ENCODE measurements at regions of chr11 and their contacts with region 1.

Region 1: GRCh38 chr11:72483412-72484186 is 49.3 kb upstream of the CLPB start:
- DNase-seq: no peak
- H3K4me3 Mint-ChIP-seq: no peak overlapping the region
- H3K27ac Mint-ChIP-seq: peak overlapping the region; percentile 7
- H3K4me1 Mint-ChIP-seq: peaks cover 13% of the 10 kb centered on the region
- H3K27me3 Mint-ChIP-seq: peaks cover 13% of the 10 kb centered on the region

Region 2: GRCh38 chr11:72519220-72519881 is 35.8 kb after region 1 on chr11:
- intact Hi-C with region 1: loop called (anchors 5 kb)
- DNase-seq: peak; percentile 11
- H3K4me3 Mint-ChIP-seq: peak overlapping the region; percentile 63
- H3K27ac Mint-ChIP-seq: peak overlapping the region; percentile 50
- H3K4me1 Mint-ChIP-seq: peaks cover 23% of the 10 kb centered on the region
- H3K27me3 Mint-ChIP-seq: peaks cover 29% of the 10 kb centered on the region

Region 3: DNA sequence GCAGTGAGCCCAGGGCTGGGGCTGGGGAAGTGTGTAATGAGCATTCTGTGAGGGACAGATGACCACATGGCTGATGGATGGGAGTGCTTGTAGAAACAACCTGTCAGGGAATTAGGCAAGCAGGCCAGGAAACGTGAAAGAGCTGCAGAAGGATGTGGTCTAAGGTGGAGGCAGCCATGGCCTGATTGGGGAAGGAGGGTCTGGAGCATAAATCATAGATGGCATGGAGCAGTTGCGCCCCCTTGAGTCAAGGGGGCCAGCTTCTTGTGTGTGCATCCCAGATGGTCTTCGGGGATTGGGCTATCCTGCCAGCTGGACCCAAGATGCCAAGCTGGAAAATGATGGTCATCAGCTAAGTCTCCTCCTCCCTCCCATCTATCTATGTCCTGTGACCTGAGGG is 70.1 kb after region 1 on chr11:
- intact Hi-C with region 1: loop called (anchors 5 kb)
- DNase-seq: no peak
- H3K4me3 Mint-ChIP-seq: no peak overlapping the region
- H3K27ac Mint-ChIP-seq: no peak overlapping the region
- H3K4me1 Mint-ChIP-seq: peaks cover 5% of the 10 kb centered on the region
- H3K27me3 Mint-ChIP-seq: peaks cover 16% of the 10 kb centered on the region

Region 4: DNA sequence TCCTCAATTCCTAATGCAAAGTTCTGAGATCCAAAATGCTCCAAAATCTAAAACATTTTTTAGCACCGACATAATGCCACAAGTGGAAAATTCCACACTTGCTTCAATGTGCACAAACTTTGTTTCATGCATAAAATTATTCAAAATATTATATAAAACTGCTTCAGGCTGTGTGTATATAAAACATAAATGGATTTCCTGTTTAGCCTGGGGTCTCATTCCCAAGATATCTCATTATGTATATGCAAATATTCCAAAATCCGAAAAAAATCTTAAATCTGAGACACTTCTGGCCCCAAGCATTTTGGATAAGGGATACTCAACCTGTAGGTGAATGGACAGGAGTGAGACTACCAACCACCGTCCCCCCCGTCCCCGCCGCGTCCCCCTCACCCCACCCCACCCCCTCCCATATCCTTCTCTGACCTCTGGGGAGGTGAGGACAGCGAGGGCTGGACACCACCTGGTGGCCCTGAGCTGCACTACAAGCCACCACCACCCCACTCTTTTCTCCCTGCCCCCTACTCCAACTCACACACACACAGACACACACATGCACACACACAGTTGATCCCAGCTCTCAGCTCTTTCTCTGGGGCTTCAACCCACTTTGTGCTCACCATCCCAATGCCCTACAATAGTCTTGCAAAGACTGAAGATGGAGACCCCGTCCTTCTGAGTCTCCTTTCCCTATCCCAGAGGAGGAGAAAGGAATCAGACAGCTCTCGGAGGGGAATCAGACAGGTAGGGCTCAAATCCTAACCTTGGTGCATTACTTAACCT is 89.7 kb after region 1 on chr11:
- intact Hi-C with region 1: loop called (anchors 1 kb)
- DNase-seq: no peak
- H3K4me3 Mint-ChIP-seq: no peak overlapping the region
- H3K27ac Mint-ChIP-seq: no peak overlapping the region
- H3K4me1 Mint-ChIP-seq: peaks cover 8% of the 10 kb centered on the region
- H3K27me3 Mint-ChIP-seq: peaks cover 10% of the 10 kb centered on the region

Region 5: GRCh38 chr11:72585762-72586311 is 102.2 kb after region 1 on chr11:
- intact Hi-C with region 1: loop called (anchors 1 kb)
- DNase-seq: peak; percentile 55
- H3K4me3 Mint-ChIP-seq: peak overlapping the region; percentile 40
- H3K27ac Mint-ChIP-seq: no peak overlapping the region
- H3K4me1 Mint-ChIP-seq: peaks cover 18% of the 10 kb centered on the region
- H3K27me3 Mint-ChIP-seq: peaks cover 51% of the 10 kb centered on the region

Measured in activated T-helper 2 cell treated with anti-CD3 and anti-CD28 coated beads, Interferon-gamma antibody, Interleukin-2, Interleukin-4, amounts not matched to agents 10 μg/mL and 5 μg/mL and 100 μg/mL, durations not matched to agents 14 hours and 24 hours and 36 hours (primary cell).